ENCODE measurements at regions of chr12 and their contacts with region 1.

Region 1: DNA sequence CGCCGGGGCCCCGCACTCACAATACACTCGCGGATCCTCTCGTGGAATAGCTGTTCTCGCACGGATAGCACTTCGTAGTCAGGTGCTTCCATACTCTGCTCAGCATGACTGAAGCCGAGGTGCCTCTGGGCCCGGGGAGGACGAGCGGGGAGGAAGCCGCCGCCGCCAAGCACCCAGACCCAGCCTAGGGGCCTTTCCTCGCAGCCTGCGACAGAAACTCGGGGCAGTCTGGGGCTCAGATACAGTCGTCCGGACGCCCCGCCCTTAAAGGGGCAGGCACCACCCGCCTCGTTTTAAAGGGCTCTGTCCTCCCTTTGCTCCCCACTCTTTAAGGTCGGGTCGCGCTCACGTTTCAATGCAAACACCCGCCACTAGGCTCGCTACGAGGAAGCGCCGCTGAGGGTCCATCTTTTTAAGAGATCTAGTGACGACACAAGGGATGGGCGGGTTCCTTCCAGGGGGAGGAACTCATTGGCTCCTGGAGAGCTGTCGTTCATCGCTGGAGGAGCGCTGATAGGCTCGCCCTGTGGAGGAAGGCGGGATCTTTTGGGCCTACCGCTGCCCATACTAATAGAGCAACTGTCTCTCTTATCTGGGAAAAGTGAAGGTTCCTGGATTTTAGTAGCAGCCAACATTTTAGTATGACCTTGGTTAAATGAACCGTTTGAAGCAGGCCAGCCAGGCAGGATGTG is at the start of gene LMBR1L:
- DNase-seq: peak; percentile 99
- H3K4me3 ChIP-seq: peak within 1 kb of the TSS; percentile 95
- H3K27ac ChIP-seq: peak within 1 kb of the TSS; percentile 81
- H3K4me1 ChIP-seq: peaks cover 8% of the 10 kb centered on the region
- H3K27me3 ChIP-seq: no peaks in the 10 kb centered on the region
- CTCF ChIP-seq: peak; percentile 49; the same call in 1 of the 2 replicates
- total RNA-seq, gene LMBR1L: 47.2 and 55.7 TPM in 2 replicates

Region 2: GRCh38 chr12:49014547-49014946 is 96.1 kb before region 1 on chr12:
- CTCF ChIA-PET with region 1: no interaction called
- POLR2A ChIA-PET with region 1: no interaction called
- intact Hi-C with region 1: loop called (anchors 5 kb)
- DNase-seq: no peak
- H3K4me3 ChIP-seq: no peak overlapping the region
- H3K27ac ChIP-seq: no peak overlapping the region
- H3K4me1 ChIP-seq: peaks cover 13% of the 10 kb centered on the region
- H3K27me3 ChIP-seq: no peaks in the 10 kb centered on the region
- CTCF ChIP-seq: peak; percentile 46

Region 3: DNA sequence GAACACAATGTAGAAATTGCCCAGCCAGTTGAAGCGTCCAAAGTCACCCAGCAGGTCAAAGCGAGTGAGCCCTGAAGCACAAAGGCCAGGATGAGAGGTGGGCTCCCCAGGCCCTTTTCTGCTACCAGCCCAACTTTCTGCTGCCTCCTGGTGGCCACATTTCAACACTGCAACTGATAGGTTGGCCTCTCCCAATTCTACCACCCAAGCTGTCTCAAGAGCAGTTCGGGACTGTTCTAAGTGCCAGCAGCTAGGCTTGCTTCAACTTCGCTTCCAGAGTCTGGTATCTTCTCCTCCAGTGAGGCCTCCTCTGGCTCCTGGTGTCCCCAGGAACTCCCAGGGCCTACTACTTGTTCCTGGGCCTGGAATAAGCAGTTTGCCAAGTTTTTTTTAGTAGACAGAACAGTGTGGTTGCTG is 12.6 kb before region 1 on chr12:
- CTCF ChIA-PET with region 1: interaction called, 19 read pairs
- POLR2A ChIA-PET with region 1: no interaction called
- intact Hi-C with region 1: no loop called
- DNase-seq: peak; percentile 67
- H3K4me3 ChIP-seq: no peak overlapping the region
- H3K27ac ChIP-seq: no peak overlapping the region
- H3K4me1 ChIP-seq: no peaks in the 10 kb centered on the region
- H3K27me3 ChIP-seq: peaks cover 24% of the 10 kb centered on the region
- CTCF ChIP-seq: peak; percentile 86

Region 4: GRCh38 chr12:49208676-49209075 is 98.1 kb after region 1 on chr12:
- CTCF ChIA-PET with region 1: no interaction called
- POLR2A ChIA-PET with region 1: no interaction called
- intact Hi-C with region 1: no loop called
- DNase-seq: no peak
- H3K4me3 ChIP-seq: no peak overlapping the region
- H3K27ac ChIP-seq: no peak overlapping the region
- H3K4me1 ChIP-seq: peaks cover 5% of the 10 kb centered on the region
- H3K27me3 ChIP-seq: no peaks in the 10 kb centered on the region
- CTCF ChIP-seq: no peak

Measured in A673 (cell line).